CD8-positive, alpha-beta T cell (primary cell): ENCODE measurements at regions of chr1 and their contacts with region 1.

Region 1: GRCh38 chr1:214261206-214262123 is 19.5 kb upstream of the SMYD2 start:
- DNase-seq: peak; percentile 61 to 89 (median 80)
- ATAC-seq: peak; percentile 96
- H3K4me3 ChIP-seq: no peak overlapping the region
- H3K4me3 Mint-ChIP-seq: no peak overlapping the region
- H3K27ac ChIP-seq: no peak overlapping the region
- H3K27ac Mint-ChIP-seq: no peak overlapping the region
- H3K4me1 ChIP-seq: peaks cover 3% of the 10 kb centered on the region
- H3K4me1 Mint-ChIP-seq: peaks cover 2% of the 10 kb centered on the region
- H3K27me3 ChIP-seq: peaks cover 0 to 2% of the 10 kb centered on the region in 2 experiments
- H3K27me3 Mint-ChIP-seq: peaks cover 63% of the 10 kb centered on the region
- CTCF ChIP-seq: peak; percentile 94

Region 2: DNA sequence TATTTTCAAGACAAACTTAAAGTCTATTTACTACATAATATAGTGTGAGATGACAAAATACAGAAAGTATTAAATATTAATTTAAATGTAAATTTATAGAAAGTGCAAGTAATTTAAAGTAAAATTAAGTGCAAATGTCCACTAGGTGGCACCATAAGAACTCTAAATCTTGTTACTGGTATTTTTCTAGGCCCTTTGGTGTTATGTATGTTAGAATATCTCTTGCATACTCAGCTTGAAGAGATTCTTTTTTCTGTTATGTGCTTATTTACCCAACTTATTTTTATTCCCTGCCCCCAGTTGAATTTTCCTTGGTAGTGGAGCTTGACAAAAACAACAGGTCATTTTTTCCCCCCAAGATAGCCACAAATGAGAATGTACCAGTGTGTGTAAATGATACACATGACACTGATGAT is 1138.9 kb before region 1 on chr1:
- CTCF ChIA-PET with region 1: no interaction called
- POLR2A ChIA-PET with region 1: no interaction called
- intact Hi-C with region 1: loop called in 1 of 2 experiments (anchors 10 kb)
- DNase-seq: peak in 2 of 9 experiments; percentile 33 to 47
- ATAC-seq: no peak
- H3K4me3 ChIP-seq: no peak overlapping the region
- H3K4me3 Mint-ChIP-seq: no peak overlapping the region
- H3K27ac ChIP-seq: no peak overlapping the region
- H3K27ac Mint-ChIP-seq: no peak overlapping the region
- H3K4me1 ChIP-seq: no peaks in the 10 kb centered on the region
- H3K4me1 Mint-ChIP-seq: peaks cover 6% of the 10 kb centered on the region
- H3K27me3 ChIP-seq: no peaks in the 10 kb centered on the region
- H3K27me3 Mint-ChIP-seq: no peaks in the 10 kb centered on the region
- CTCF ChIP-seq: peak; percentile 72

Region 3: GRCh38 chr1:214050513-214051401 is 210.7 kb before region 1 on chr1:
- CTCF ChIA-PET with region 1: no interaction called
- POLR2A ChIA-PET with region 1: no interaction called
- intact Hi-C with region 1: no loop called
- DNase-seq: no peak
- ATAC-seq: no peak
- H3K4me3 ChIP-seq: no peak overlapping the region
- H3K4me3 Mint-ChIP-seq: no peak overlapping the region
- H3K27ac ChIP-seq: no peak overlapping the region
- H3K27ac Mint-ChIP-seq: no peak overlapping the region
- H3K4me1 ChIP-seq: no peaks in the 10 kb centered on the region
- H3K4me1 Mint-ChIP-seq: no peaks in the 10 kb centered on the region
- H3K27me3 ChIP-seq: no peaks in the 10 kb centered on the region
- H3K27me3 Mint-ChIP-seq: peaks cover 2% of the 10 kb centered on the region
- CTCF ChIP-seq: no peak

Region 4: DNA sequence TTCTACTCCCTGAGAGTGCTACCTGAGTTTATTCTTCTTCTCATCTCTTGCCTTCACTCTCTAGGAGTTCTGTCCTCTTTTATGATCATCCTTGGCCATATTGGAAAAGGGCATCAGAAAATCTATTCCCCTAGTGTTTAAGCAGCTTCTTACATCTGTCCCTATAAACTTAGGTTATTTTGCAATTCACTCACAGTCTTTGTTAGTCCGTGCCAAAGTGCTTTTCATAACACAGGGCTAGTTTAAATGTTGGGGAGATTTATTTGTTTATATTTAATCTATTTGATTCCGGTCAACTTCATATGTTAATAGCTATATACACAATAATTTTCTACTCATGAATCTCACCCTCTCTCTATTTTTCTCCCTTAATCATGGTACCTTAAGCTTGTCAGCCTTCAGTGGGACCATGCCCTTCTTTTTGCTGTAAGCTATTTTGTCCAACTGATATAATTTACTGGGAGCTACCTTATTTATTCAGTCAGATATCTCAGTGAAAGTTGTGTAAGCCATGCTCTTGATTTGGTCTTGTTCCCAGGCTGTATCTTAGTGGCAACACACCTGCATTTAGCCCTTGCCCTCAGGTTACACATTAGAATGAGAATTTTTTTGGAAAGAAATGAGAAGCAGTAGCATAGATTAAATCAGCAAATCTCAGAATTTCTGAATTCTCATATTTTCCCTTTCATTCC is 86.8 kb before region 1 on chr1:
- CTCF ChIA-PET with region 1: no interaction called
- POLR2A ChIA-PET with region 1: no interaction called
- intact Hi-C with region 1: no loop called
- DNase-seq: no peak
- ATAC-seq: no peak
- H3K4me3 ChIP-seq: no peak overlapping the region
- H3K4me3 Mint-ChIP-seq: no peak overlapping the region
- H3K27ac ChIP-seq: no peak overlapping the region
- H3K27ac Mint-ChIP-seq: no peak overlapping the region
- H3K4me1 ChIP-seq: no peaks in the 10 kb centered on the region
- H3K4me1 Mint-ChIP-seq: no peaks in the 10 kb centered on the region
- H3K27me3 ChIP-seq: no peaks in the 10 kb centered on the region
- H3K27me3 Mint-ChIP-seq: peaks cover 33% of the 10 kb centered on the region
- CTCF ChIP-seq: no peak

Region 5: DNA sequence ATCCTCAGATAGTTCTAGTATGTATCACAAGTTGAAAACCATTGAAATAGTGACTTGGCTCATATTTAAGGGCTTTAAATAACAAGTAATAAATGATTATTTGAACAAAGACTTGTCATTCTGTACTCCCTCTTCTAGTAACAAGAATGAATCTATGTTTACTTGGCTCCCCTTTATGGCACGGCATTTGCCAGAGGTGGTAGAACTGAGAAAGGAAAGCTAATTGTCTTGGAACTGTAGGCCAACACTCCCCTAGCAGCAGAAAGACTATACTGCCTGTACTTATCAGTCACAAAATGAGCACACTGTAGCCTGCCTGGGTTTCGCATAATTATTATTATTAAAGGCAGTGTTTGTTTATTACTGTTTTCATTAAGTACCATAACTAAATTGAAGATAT is 10.1 kb before region 1 on chr1:
- CTCF ChIA-PET with region 1: interaction called, 42 read pairs
- POLR2A ChIA-PET with region 1: no interaction called
- intact Hi-C with region 1: no loop called
- DNase-seq: no peak
- ATAC-seq: no peak
- H3K4me3 ChIP-seq: no peak overlapping the region
- H3K4me3 Mint-ChIP-seq: no peak overlapping the region
- H3K27ac ChIP-seq: no peak overlapping the region
- H3K27ac Mint-ChIP-seq: no peak overlapping the region
- H3K4me1 ChIP-seq: no peaks in the 10 kb centered on the region
- H3K4me1 Mint-ChIP-seq: no peaks in the 10 kb centered on the region
- H3K27me3 ChIP-seq: no peaks in the 10 kb centered on the region
- H3K27me3 Mint-ChIP-seq: peaks cover 32% of the 10 kb centered on the region
- CTCF ChIP-seq: no peak

Region 6: DNA sequence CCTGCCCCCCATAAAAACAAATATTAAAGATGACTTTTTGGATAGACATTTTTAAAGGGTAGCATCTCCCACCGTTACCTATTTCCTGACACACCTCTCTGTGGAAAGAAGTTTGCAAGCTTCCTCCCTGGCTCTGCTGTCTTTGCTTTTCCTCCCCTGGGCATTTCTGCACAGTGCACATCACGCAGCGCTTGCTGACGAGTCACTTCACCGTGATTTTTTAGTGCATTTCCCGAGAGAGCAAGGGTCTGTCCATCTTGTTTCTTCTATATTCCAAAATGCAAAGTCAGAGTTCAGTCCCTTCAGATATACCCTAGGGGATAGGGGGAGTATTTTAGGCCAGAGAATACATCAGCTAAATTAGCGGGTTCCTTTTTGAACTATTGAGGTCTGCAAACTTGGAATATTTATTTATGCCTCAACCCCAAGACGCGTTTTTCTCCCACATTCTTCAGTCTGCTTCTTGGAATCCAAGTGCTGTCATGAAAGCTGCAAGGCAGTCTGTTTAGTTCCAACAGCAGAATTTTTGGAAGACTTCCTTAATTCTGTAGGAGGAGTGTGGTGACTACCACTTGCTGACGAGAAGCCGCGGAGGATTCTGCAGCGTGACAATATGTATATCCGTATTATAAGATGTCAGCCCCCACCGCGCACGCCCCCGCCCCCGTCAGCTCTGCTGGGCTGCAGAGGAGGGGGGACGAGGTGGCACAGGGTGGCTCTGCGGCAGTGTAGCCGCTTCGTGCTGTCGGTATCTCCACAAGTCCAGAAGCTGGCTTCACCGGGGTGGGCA is 41.9 kb after region 1 on chr1:
- CTCF ChIA-PET with region 1: interaction called, 25 read pairs
- POLR2A ChIA-PET with region 1: interaction called, 4 read pairs
- intact Hi-C with region 1: no loop called
- DNase-seq: no peak
- ATAC-seq: no peak
- H3K4me3 ChIP-seq: no peak overlapping the region
- H3K4me3 Mint-ChIP-seq: no peak overlapping the region
- H3K27ac ChIP-seq: no peak overlapping the region
- H3K27ac Mint-ChIP-seq: peak overlapping the region; percentile 66
- H3K4me1 ChIP-seq: peaks cover 9% of the 10 kb centered on the region
- H3K4me1 Mint-ChIP-seq: peaks cover 38% of the 10 kb centered on the region
- H3K27me3 ChIP-seq: no peaks in the 10 kb centered on the region
- H3K27me3 Mint-ChIP-seq: no peaks in the 10 kb centered on the region
- CTCF ChIP-seq: no peak

Region 7: GRCh38 chr1:214349781-214350180 is 88.3 kb after region 1 on chr1:
- CTCF ChIA-PET with region 1: interaction called, 19 read pairs
- POLR2A ChIA-PET with region 1: no interaction called
- intact Hi-C with region 1: no loop called
- DNase-seq: no peak
- ATAC-seq: no peak
- H3K4me3 ChIP-seq: no peak overlapping the region
- H3K4me3 Mint-ChIP-seq: no peak overlapping the region
- H3K27ac ChIP-seq: no peak overlapping the region
- H3K27ac Mint-ChIP-seq: no peak overlapping the region
- H3K4me1 ChIP-seq: no peaks in the 10 kb centered on the region
- H3K4me1 Mint-ChIP-seq: no peaks in the 10 kb centered on the region
- H3K27me3 ChIP-seq: no peaks in the 10 kb centered on the region
- H3K27me3 Mint-ChIP-seq: no peaks in the 10 kb centered on the region
- CTCF ChIP-seq: no peak

Region 8: GRCh38 chr1:214632091-214632490 is 370.6 kb after region 1 on chr1:
- CTCF ChIA-PET with region 1: interaction called, 5 read pairs
- POLR2A ChIA-PET with region 1: no interaction called
- intact Hi-C with region 1: loop called in 1 of 2 experiments (anchors 5 kb)
- DNase-seq: peak in 6 of 9 experiments; percentile 5 to 79 (median 46)
- ATAC-seq: peak; percentile 81
- H3K4me3 ChIP-seq: no peak overlapping the region
- H3K4me3 Mint-ChIP-seq: peak overlapping the region; percentile 42
- H3K27ac ChIP-seq: no peak overlapping the region
- H3K27ac Mint-ChIP-seq: peak overlapping the region; percentile 78
- H3K4me1 ChIP-seq: peaks cover 10% of the 10 kb centered on the region
- H3K4me1 Mint-ChIP-seq: peaks cover 19% of the 10 kb centered on the region
- H3K27me3 ChIP-seq: no peaks in the 10 kb centered on the region
- H3K27me3 Mint-ChIP-seq: no peaks in the 10 kb centered on the region
- CTCF ChIP-seq: no peak

Region 9: DNA sequence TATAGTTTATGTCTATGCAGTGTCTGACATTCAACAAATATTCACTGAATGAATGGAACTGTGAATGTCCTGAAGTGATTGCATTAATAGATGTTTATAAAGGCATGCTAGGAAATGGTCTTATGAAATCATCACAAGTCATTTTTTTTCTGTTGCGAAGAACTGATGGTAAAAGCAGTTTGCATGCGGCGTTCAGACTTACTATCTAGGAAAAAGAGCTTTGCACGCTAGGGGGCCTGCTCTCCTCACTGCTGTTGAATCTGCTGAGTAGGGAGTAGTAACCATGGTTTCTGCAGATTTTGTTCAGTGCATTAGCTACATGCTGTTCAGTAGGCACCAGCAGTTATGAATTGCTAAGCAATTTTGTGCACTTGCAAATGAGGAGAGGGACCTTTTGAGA is 399.4 kb after region 1 on chr1:
- CTCF ChIA-PET with region 1: no interaction called
- POLR2A ChIA-PET with region 1: no interaction called
- intact Hi-C with region 1: no loop called
- DNase-seq: no peak
- ATAC-seq: no peak
- H3K4me3 ChIP-seq: no peak overlapping the region
- H3K4me3 Mint-ChIP-seq: no peak overlapping the region
- H3K27ac ChIP-seq: no peak overlapping the region
- H3K27ac Mint-ChIP-seq: no peak overlapping the region
- H3K4me1 ChIP-seq: no peaks in the 10 kb centered on the region
- H3K4me1 Mint-ChIP-seq: peaks cover 2% of the 10 kb centered on the region
- H3K27me3 ChIP-seq: no peaks in the 10 kb centered on the region
- H3K27me3 Mint-ChIP-seq: no peaks in the 10 kb centered on the region
- CTCF ChIP-seq: no peak